T-cell (primary cell): ENCODE measurements at regions of chr19 and their contacts with region 1.

Region 1: DNA sequence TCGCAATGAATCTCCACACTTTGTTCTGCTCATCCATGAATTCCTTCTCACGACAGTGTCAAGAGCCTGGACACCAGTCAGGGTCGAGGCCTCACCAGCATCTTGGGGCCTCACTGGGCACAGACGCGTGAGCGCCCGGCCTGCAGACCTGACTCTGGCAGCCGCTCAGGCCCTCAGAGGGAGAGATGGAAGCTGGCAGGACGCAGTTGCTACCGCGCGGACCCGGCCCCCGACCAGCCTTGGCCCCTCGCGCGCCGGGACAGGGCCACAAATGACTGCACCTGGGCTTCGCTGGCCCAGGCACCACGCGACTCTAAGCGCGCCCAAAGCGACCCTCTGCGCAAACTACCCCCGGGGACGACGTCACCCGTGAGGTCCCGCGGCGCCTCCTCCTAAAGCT is 937 bp upstream of the USP29 start:
- DNase-seq: no peak
- ATAC-seq: no peak
- H3K4me3 ChIP-seq: no peak overlapping the region
- H3K4me3 Mint-ChIP-seq: no peak overlapping the region
- H3K27ac ChIP-seq: no peak overlapping the region
- H3K27ac Mint-ChIP-seq: no peak overlapping the region
- H3K4me1 ChIP-seq: no peaks in the 10 kb centered on the region
- H3K4me1 Mint-ChIP-seq: no peaks in the 10 kb centered on the region
- H3K27me3 ChIP-seq: no peaks in the 10 kb centered on the region
- H3K27me3 Mint-ChIP-seq: no peaks in the 10 kb centered on the region

Region 2: DNA sequence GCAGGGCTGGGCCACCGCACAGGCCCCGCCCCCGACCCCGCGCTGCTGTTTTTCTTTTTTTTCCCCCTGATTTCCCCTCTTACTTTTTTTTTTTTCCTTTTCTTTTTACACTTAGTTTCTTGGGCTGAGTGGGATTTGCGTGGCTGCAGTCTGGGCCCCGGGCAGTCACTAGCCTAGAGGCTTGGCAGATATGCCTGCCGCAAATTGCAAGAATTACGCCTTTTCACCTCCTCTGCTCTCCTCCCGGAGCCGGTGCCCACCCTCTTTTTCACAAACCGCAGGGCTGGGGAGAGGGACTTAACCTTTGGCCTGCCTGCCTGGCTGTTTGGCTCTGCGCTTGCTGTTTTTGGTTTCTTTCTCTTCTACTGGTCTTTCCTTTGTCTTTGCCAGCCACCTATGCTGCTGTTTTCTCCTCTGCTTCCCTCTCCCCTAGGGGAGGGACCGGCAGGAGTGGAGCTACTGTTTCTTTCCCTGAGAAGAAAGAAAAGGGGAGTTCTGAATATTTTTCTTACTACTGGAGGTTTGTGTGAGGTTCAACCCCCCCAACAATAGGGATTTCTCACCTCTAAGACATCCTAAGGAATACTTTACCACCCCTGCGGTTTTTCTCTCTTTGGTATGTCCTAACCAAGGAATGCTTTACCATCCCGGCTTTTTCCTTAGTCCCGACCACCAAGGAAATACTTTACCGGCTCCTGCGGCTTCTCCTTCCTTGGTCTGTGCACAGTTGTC is 684.9 kb after region 1 on chr19:
- CTCF ChIA-PET with region 1: no interaction called
- POLR2A ChIA-PET with region 1: interaction called in 1 of 2 experiments, 11 read pairs
- DNase-seq: peak in 1 of 35 experiments; percentile 16
- ATAC-seq: peak in 2 of 4 experiments; percentile 36 to 57
- H3K4me3 ChIP-seq: peak overlapping the region; percentile 17 to 58
- H3K4me3 Mint-ChIP-seq: peak overlapping the region; percentile 66 to 85 (median 71)
- H3K27ac ChIP-seq: no peak overlapping the region
- H3K27ac Mint-ChIP-seq: peak overlapping the region; percentile 53 to 74
- H3K4me1 ChIP-seq: peaks cover 10 to 13% of the 10 kb centered on the region in 2 experiments
- H3K4me1 Mint-ChIP-seq: peaks cover 23 to 30% (median 30%) of the 10 kb centered on the region in 3 donors
- H3K27me3 ChIP-seq: no peaks in the 10 kb centered on the region
- H3K27me3 Mint-ChIP-seq: no peaks in the 10 kb centered on the region